ENCODE measurements at regions of chr16 and their contacts with region 1.

Region 1: GRCh38 chr16:15888072-15888976 is at the start of gene CEP20:
- DNase-seq: peak; percentile 99 to 100 (median 100)
- H3K4me3 ChIP-seq: peak within 1 kb of the TSS; percentile 94 to 99
- H3K4me3 Mint-ChIP-seq: peak within 1 kb of the TSS; percentile 98 to 100 (median 100)
- H3K27ac ChIP-seq: peak within 1 kb of the TSS; percentile 88
- H3K27ac Mint-ChIP-seq: peak within 1 kb of the TSS; percentile 96 to 100 (median 99)
- H3K4me1 ChIP-seq: peaks cover 30% of the 10 kb centered on the region
- H3K4me1 Mint-ChIP-seq: peaks cover 21 to 39% (median 31%) of the 10 kb centered on the region in 4 donors
- H3K27me3 ChIP-seq: no peaks in the 10 kb centered on the region
- H3K27me3 Mint-ChIP-seq: no peaks in the 10 kb centered on the region
- total RNA-seq, gene CEP20: 22.3 to 30.4 TPM

Region 2: DNA sequence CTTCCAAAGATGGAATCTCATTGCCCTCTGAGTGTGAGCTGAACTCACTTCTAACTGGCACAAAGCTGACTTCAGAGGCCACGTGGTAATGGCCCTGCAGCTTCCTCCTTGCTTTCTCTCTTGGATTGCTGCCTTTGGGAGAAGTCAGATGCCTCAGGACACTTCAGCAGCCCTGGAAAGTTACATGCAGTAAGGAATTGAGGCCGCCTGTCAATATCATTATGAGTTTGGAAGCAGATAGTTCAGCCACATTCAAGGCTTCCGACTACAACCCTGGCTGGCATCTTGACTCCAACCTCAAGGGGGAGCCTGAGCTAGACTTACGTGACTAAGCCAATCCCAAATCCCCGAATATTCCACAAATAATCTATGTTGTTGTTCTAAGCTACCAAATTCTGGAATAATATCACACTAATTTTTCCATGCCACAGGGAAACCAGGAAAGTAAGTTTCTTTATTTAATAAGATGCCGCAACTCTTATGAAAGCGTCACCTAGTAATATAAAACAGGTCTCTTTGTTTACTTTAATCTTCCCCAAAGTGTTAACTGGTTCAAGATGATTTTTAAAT is 13.5 kb before region 1 on chr16:
- CTCF ChIA-PET with region 1: interaction called, 10 read pairs
- POLR2A ChIA-PET with region 1: interaction called, 7 read pairs
- intact Hi-C with region 1: loop called (anchors 2 kb)
- DNase-seq: peak in 1 of 5 donors; percentile 3
- H3K4me3 ChIP-seq: no peak overlapping the region
- H3K4me3 Mint-ChIP-seq: no peak overlapping the region
- H3K27ac ChIP-seq: no peak overlapping the region
- H3K27ac Mint-ChIP-seq: peak overlapping the region in 4 of 7 donors; percentile 35 to 82 (median 44)
- H3K4me1 ChIP-seq: no peaks in the 10 kb centered on the region
- H3K4me1 Mint-ChIP-seq: peaks cover 0 to 4% (median 4%) of the 10 kb centered on the region in 4 donors
- H3K27me3 ChIP-seq: no peaks in the 10 kb centered on the region
- H3K27me3 Mint-ChIP-seq: no peaks in the 10 kb centered on the region

Region 3: DNA sequence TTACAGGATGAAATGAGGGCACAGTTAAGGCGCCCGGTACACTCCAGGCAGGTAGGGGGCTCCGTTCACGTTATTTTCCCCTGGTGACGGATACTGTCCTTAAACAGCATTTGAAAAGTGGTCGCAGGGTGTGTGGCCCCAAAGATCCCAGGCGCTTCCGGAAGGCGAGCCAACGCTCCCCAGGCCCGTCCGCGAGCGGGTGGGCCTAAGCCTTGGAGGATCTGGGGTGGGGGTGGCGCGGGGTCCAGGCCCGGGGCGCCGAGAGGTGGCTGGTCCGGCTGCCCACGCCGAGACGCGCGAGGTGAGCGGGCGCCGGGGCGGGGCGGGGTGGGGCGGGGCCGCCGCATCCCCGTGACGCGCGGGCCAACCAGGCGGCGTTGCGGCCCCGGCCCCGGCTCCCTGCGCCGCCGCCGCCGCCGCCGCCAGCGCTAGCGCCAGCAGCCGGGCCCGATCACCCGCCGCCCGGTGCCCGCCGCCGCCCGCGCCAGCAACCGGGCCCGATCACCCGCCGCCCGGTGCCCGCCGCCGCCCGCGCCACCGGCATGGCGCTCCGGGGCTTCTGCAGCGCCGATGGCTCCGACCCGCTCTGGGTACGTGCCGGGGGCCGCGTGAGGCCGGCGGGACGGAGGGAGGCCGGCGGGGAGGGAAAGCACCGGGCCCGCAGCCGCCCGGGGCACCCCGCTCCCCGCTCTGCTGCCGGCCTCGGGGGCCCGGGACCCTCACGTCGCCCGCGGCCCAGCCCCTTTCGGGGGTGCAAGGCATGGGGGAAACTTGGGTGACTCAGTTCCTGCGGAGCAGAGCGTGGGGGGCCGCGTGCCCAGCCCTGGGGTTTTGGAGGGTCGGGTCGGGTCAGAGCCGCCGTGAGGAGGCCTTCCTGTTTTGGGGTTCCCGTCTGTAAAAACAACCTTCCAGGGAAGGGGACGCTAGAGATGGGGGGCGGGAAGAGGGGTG is 61.2 kb after region 1 on chr16 and contains the start of gene ABCC1:
- CTCF ChIA-PET with region 1: no interaction called
- POLR2A ChIA-PET with region 1: interaction called, 11 read pairs
- intact Hi-C with region 1: loop called (anchors 1 kb)
- DNase-seq: peak; percentile 49 to 78 (median 61)
- H3K4me3 ChIP-seq: peak within 1 kb of the TSS; percentile 76 to 92
- H3K4me3 Mint-ChIP-seq: peak within 1 kb of the TSS; percentile 94 to 98 (median 97)
- H3K27ac ChIP-seq: peak within 1 kb of the TSS; percentile 83
- H3K27ac Mint-ChIP-seq: peak within 1 kb of the TSS; percentile 94 to 100 (median 99)
- H3K4me1 ChIP-seq: peaks cover 46% of the 10 kb centered on the region
- H3K4me1 Mint-ChIP-seq: peaks cover 21 to 53% (median 39%) of the 10 kb centered on the region in 4 donors
- H3K27me3 ChIP-seq: no peaks in the 10 kb centered on the region
- H3K27me3 Mint-ChIP-seq: no peaks in the 10 kb centered on the region
- total RNA-seq, gene ABCC1: 57.3 to 69.9 TPM

Region 4: GRCh38 chr16:15961060-15961511 is 72.8 kb after region 1 on chr16:
- CTCF ChIA-PET with region 1: interaction called, 3 read pairs
- POLR2A ChIA-PET with region 1: interaction called, 7 read pairs
- intact Hi-C with region 1: loop called (anchors 1 kb)
- DNase-seq: peak; percentile 86 to 94 (median 89)
- H3K4me3 ChIP-seq: peak overlapping the region; percentile 33 to 55
- H3K4me3 Mint-ChIP-seq: peak overlapping the region; percentile 81 to 93 (median 88)
- H3K27ac ChIP-seq: peak overlapping the region; percentile 96
- H3K27ac Mint-ChIP-seq: peak overlapping the region; percentile 94 to 100 (median 99)
- H3K4me1 ChIP-seq: peaks cover 83% of the 10 kb centered on the region
- H3K4me1 Mint-ChIP-seq: peaks cover 56 to 86% (median 71%) of the 10 kb centered on the region in 4 donors
- H3K27me3 ChIP-seq: no peaks in the 10 kb centered on the region
- H3K27me3 Mint-ChIP-seq: no peaks in the 10 kb centered on the region

Region 5: GRCh38 chr16:15973421-15973820 is 85.1 kb after region 1 on chr16:
- CTCF ChIA-PET with region 1: no interaction called
- POLR2A ChIA-PET with region 1: no interaction called
- intact Hi-C with region 1: no loop called
- DNase-seq: no peak
- H3K4me3 ChIP-seq: no peak overlapping the region
- H3K4me3 Mint-ChIP-seq: no peak overlapping the region
- H3K27ac ChIP-seq: no peak overlapping the region
- H3K27ac Mint-ChIP-seq: no peak overlapping the region
- H3K4me1 ChIP-seq: peaks cover 10% of the 10 kb centered on the region
- H3K4me1 Mint-ChIP-seq: peaks cover 20 to 49% (median 40%) of the 10 kb centered on the region in 4 donors
- H3K27me3 ChIP-seq: no peaks in the 10 kb centered on the region
- H3K27me3 Mint-ChIP-seq: no peaks in the 10 kb centered on the region

Region 6: GRCh38 chr16:16025214-16025968 is 137.1 kb after region 1 on chr16:
- CTCF ChIA-PET with region 1: interaction called, 4 read pairs
- POLR2A ChIA-PET with region 1: interaction called, 8 read pairs
- intact Hi-C with region 1: loop called (anchors 2 kb)
- DNase-seq: peak; percentile 56 to 79 (median 65)
- H3K4me3 ChIP-seq: no peak overlapping the region
- H3K4me3 Mint-ChIP-seq: peak overlapping the region in 7 of 8 donors; percentile 48 to 79 (median 65)
- H3K27ac ChIP-seq: peak overlapping the region; percentile 81
- H3K27ac Mint-ChIP-seq: peak overlapping the region; percentile 90 to 98 (median 97)
- H3K4me1 ChIP-seq: peaks cover 25% of the 10 kb centered on the region
- H3K4me1 Mint-ChIP-seq: peaks cover 20 to 58% (median 33%) of the 10 kb centered on the region in 4 donors
- H3K27me3 ChIP-seq: no peaks in the 10 kb centered on the region
- H3K27me3 Mint-ChIP-seq: no peaks in the 10 kb centered on the region

Region 7: GRCh38 chr16:16033208-16033717 is 144.9 kb after region 1 on chr16:
- CTCF ChIA-PET with region 1: interaction called, 14 read pairs
- POLR2A ChIA-PET with region 1: interaction called, 19 read pairs
- intact Hi-C with region 1: loop called (anchors 1 kb)
- DNase-seq: peak; percentile 45 to 66 (median 57)
- H3K4me3 ChIP-seq: no peak overlapping the region
- H3K4me3 Mint-ChIP-seq: peak overlapping the region in 7 of 8 donors; percentile 59 to 72 (median 61)
- H3K27ac ChIP-seq: peak overlapping the region; percentile 3
- H3K27ac Mint-ChIP-seq: peak overlapping the region; percentile 76 to 91 (median 85)
- H3K4me1 ChIP-seq: peaks cover 29% of the 10 kb centered on the region
- H3K4me1 Mint-ChIP-seq: peaks cover 20 to 37% (median 28%) of the 10 kb centered on the region in 4 donors
- H3K27me3 ChIP-seq: no peaks in the 10 kb centered on the region
- H3K27me3 Mint-ChIP-seq: no peaks in the 10 kb centered on the region